GM12878 (cell line): ENCODE measurements at regions of chr4 and their contacts with region 1.

Region 1: GRCh38 chr4:36399762-36400353 is 118.4 kb downstream of the DTHD1 start:
- DNase-seq: peak; percentile 24
- ATAC-seq: peak; percentile 82
- H3K4me3 ChIP-seq: no peak overlapping the region
- H3K27ac ChIP-seq: no peak overlapping the region
- H3K4me1 ChIP-seq: no peaks in the 10 kb centered on the region; the same call in 1 of the 2 replicates
- H3K27me3 ChIP-seq: no peaks in the 10 kb centered on the region
- CTCF ChIP-seq: peak; percentile 68 to 85 (median 73)
- EP300 ChIP-seq: no peak
- POLR2A ChIP-seq: no peak
- RAD21 ChIP-seq: peak; percentile 99

Region 2: GRCh38 chr4:36187723-36188333 is 212.0 kb before region 1 on chr4:
- CTCF ChIA-PET with region 1: interaction called, 36 read pairs
- POLR2A ChIA-PET with region 1: no interaction called
- RAD21 ChIA-PET with region 1: interaction called, 10 read pairs
- SMC1A ChIA-PET with region 1: interaction called, 24 read pairs
- in situ Hi-C with region 1: no loop called
- intact Hi-C with region 1: loop called (anchors 5 kb)
- DNase-seq: no peak
- ATAC-seq: peak; percentile 27; the same call in 1 of the 3 replicates
- H3K4me3 ChIP-seq: no peak overlapping the region
- H3K27ac ChIP-seq: no peak overlapping the region
- H3K4me1 ChIP-seq: peaks cover 6% of the 10 kb centered on the region
- H3K27me3 ChIP-seq: no peaks in the 10 kb centered on the region
- CTCF ChIP-seq: peak; percentile 54 to 70 (median 65)
- EP300 ChIP-seq: no peak
- POLR2A ChIP-seq: no peak
- RAD21 ChIP-seq: peak; percentile 70

Region 3: GRCh38 chr4:36255577-36255976 is 144.3 kb before region 1 on chr4:
- CTCF ChIA-PET with region 1: interaction called, 73 read pairs
- POLR2A ChIA-PET with region 1: interaction called, 3 read pairs
- RAD21 ChIA-PET with region 1: interaction called, 43 read pairs
- SMC1A ChIA-PET with region 1: interaction called, 71 read pairs
- in situ Hi-C with region 1: no loop called
- intact Hi-C with region 1: no loop called
- DNase-seq: peak; percentile 92
- ATAC-seq: peak; percentile 87
- H3K4me3 ChIP-seq: no peak overlapping the region
- H3K27ac ChIP-seq: peak overlapping the region; percentile 85
- H3K4me1 ChIP-seq: peaks cover 11% of the 10 kb centered on the region
- H3K27me3 ChIP-seq: no peaks in the 10 kb centered on the region
- CTCF ChIP-seq: no peak
- EP300 ChIP-seq: no peak; a peak in 1 of 4 replicates
- POLR2A ChIP-seq: no peak
- RAD21 ChIP-seq: 0 out of 2 replicates have a peak, but pooled peaks have one; percentile 16

Region 4: DNA sequence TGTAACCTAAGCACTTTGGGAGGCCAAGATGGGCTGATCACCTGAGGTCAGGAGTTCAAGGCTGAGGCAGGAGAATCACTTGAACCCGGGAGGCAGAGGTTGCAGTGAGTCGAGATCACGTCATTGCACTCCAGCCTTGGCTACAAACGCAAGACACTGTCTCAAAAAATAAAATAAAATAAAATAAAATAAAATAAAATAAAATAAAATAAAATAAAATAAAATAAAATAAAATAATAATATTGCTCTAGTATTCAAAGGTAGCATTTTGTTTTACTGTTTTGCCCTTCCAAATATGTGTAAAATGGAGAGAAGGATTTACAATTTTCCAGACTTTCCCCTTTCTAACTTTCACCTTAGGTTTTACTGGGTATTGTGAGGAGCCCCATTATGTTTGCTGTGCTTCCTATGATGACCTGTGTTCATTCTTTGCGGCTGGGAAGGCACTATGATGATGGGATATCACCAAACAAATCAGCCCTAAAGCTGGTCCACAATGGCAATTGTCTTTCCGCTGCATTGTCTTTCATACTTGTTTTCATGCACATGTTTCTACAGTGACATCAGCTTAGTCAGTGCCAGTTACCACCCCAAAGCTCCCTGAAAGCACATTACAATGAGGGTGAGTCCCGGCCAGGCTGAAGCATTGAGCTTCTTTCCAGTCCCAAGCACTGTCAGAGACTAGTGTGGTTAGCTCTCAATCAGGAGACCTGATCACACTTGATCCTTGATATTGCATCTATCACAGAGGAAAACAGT is 67.7 kb before region 1 on chr4:
- CTCF ChIA-PET with region 1: interaction called, 23 read pairs
- POLR2A ChIA-PET with region 1: no interaction called
- RAD21 ChIA-PET with region 1: interaction called, 6 read pairs
- SMC1A ChIA-PET with region 1: interaction called, 13 read pairs
- in situ Hi-C with region 1: no loop called
- intact Hi-C with region 1: no loop called
- DNase-seq: peak; percentile 61
- ATAC-seq: peak; percentile 89
- H3K4me3 ChIP-seq: peak overlapping the region; percentile 41; the same call in 1 of the 2 replicates
- H3K27ac ChIP-seq: peak overlapping the region; percentile 91
- H3K4me1 ChIP-seq: peaks cover 22% of the 10 kb centered on the region
- H3K27me3 ChIP-seq: no peaks in the 10 kb centered on the region
- CTCF ChIP-seq: no peak
- EP300 ChIP-seq: no peak
- POLR2A ChIP-seq: peak; percentile 78
- RAD21 ChIP-seq: no peak

Region 5: GRCh38 chr4:36385951-36386571 is 13.8 kb before region 1 on chr4:
- CTCF ChIA-PET with region 1: interaction called, 50 read pairs
- POLR2A ChIA-PET with region 1: interaction called, 3 read pairs
- RAD21 ChIA-PET with region 1: interaction called, 28 read pairs
- SMC1A ChIA-PET with region 1: interaction called, 42 read pairs
- in situ Hi-C with region 1: no loop called
- intact Hi-C with region 1: no loop called
- DNase-seq: peak; percentile 63
- ATAC-seq: peak; percentile 94
- H3K4me3 ChIP-seq: 0 out of 2 replicates have a peak overlapping the region, but pooled peaks have one; percentile 7
- H3K27ac ChIP-seq: 0 out of 2 replicates have a peak overlapping the region, but pooled peaks have one; percentile 41
- H3K4me1 ChIP-seq: peaks cover 9% of the 10 kb centered on the region; the same call in 1 of the 2 replicates
- H3K27me3 ChIP-seq: no peaks in the 10 kb centered on the region
- CTCF ChIP-seq: no peak
- EP300 ChIP-seq: no peak; a peak in 1 of 4 replicates
- POLR2A ChIP-seq: no peak
- RAD21 ChIP-seq: no peak

Region 6: GRCh38 chr4:36533944-36534343 is 134.1 kb after region 1 on chr4:
- CTCF ChIA-PET with region 1: no interaction called
- POLR2A ChIA-PET with region 1: no interaction called
- RAD21 ChIA-PET with region 1: no interaction called
- SMC1A ChIA-PET with region 1: no interaction called
- in situ Hi-C with region 1: no loop called
- intact Hi-C with region 1: no loop called
- DNase-seq: no peak
- ATAC-seq: no peak
- H3K4me3 ChIP-seq: no peak overlapping the region
- H3K27ac ChIP-seq: no peak overlapping the region
- H3K4me1 ChIP-seq: no peaks in the 10 kb centered on the region
- H3K27me3 ChIP-seq: no peaks in the 10 kb centered on the region
- CTCF ChIP-seq: no peak
- EP300 ChIP-seq: no peak
- POLR2A ChIP-seq: no peak
- RAD21 ChIP-seq: no peak